CD4-positive, alpha-beta memory T cell (primary cell): ENCODE measurements at regions of chr9 and their contacts with region 1.

Region 1: DNA sequence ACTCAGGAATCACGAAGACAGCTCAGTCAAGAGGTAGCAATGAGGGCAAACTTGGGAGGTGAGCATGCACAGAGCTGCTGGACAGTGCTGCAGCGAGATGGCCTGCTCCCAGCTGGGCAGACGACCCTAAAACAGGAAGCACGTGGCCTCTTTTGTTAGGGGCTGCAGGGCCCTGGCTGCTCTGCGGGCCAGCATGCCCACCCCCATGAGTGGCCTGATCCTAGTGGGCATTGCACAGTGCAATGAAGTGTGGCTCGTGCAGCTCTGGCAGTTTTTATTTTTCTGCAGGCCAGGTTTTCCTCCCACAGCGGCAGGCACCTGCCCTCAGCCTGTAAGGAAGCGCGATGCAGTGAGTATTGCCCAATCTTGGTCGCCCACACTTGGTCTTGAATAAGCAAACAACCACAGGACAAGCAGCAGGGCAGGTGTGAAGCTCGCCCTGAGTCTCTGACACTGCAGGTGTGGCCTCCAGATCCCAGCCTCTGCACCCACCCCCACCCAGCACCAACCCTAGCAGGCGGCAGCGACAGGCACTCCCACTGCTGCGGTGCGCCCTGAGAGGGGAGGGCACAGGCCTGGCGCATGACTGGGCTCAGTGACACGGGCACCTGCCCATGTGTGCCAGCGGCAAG is 60.8 kb downstream of the SEMA4D start:
- DNase-seq: peak; percentile 76 to 91 (median 78)
- H3K4me3 ChIP-seq: peak overlapping the region in 1 of 2 donors; percentile 17
- H3K4me3 Mint-ChIP-seq: peak overlapping the region; percentile 57 to 85 (median 74)
- H3K27ac ChIP-seq: peak overlapping the region; percentile 52
- H3K27ac Mint-ChIP-seq: peak overlapping the region; percentile 90 to 98 (median 95)
- H3K4me1 ChIP-seq: peaks cover 99% of the 10 kb centered on the region
- H3K4me1 Mint-ChIP-seq: peaks cover 61 to 96% (median 83%) of the 10 kb centered on the region in 4 donors
- H3K27me3 ChIP-seq: no peaks in the 10 kb centered on the region
- H3K27me3 Mint-ChIP-seq: no peaks in the 10 kb centered on the region

Region 2: DNA sequence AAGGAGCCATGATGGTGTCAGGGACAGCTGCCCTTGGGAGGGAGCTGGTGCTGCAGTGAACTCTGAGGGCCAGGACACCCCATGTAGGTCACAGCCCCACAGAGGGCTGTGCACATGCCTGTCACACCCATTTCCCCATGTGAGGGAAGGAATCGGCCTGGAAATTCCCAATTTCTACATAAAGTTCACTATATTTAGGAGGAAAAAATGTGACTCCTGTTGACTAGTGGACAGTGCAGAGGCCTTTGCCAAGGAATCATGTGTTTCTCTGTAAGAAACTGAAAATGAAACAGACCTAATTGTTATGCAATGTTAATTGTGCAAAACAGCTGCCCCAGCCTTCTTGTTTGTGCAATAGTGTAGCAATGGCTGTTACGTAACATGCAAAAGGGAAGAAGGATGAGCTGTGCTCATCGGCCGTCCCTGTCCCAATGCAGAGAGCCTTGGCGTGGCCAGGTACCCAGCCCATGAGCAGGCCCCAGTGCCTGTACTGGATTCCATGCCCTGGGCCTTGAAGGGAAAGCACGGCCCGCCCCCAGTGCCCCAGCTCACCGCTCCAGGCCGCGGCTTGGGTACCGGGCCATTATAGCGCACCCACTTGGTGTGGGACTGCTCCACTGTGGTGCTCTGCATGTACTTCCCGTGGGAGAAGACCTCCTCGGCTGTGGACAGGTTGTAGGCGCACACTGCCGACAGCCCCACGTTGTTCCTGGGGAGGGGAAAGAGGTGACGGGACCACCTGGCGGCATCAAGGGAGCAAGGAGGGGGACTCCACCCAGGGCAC is 48.8 kb before region 1 on chr9:
- CTCF ChIA-PET with region 1: no interaction called
- POLR2A ChIA-PET with region 1: no interaction called
- intact Hi-C with region 1: no loop called
- DNase-seq: no peak
- H3K4me3 ChIP-seq: no peak overlapping the region
- H3K4me3 Mint-ChIP-seq: no peak overlapping the region
- H3K27ac ChIP-seq: no peak overlapping the region
- H3K27ac Mint-ChIP-seq: peak overlapping the region in 2 of 7 donors; percentile 43 to 61
- H3K4me1 ChIP-seq: no peaks in the 10 kb centered on the region
- H3K4me1 Mint-ChIP-seq: peaks cover 0 to 8% (median 8%) of the 10 kb centered on the region in 4 donors
- H3K27me3 ChIP-seq: no peaks in the 10 kb centered on the region
- H3K27me3 Mint-ChIP-seq: no peaks in the 10 kb centered on the region

Region 3: DNA sequence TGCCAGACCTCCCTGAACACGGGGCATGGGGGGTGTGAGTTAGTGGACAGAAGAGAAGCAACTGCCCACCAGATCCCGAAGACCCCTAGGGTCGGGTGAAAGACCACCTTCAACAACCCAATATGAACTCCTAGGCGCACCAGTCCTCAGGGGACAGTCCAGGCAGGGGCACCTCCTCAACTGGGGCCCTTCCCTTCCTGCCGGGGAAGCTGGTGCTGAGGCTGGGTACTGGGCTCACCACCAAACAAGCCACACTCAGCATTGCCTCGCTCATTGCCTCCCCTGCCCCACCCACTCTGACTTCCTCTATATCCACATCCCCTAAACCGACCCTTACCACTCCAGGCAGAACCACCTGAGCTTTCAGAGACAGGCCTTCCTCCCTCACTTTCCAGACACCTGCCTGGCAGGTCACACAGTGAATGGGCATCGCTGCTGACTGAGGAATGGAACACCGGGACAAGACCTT is 18.3 kb after region 1 on chr9:
- CTCF ChIA-PET with region 1: interaction called, 3 read pairs
- POLR2A ChIA-PET with region 1: interaction called, 46 read pairs
- intact Hi-C with region 1: loop called (anchors 2 kb)
- DNase-seq: peak; percentile 50 to 72 (median 63)
- H3K4me3 ChIP-seq: peak overlapping the region in 1 of 2 donors; percentile 22
- H3K4me3 Mint-ChIP-seq: peak overlapping the region; percentile 72 to 90 (median 82)
- H3K27ac ChIP-seq: peak overlapping the region; percentile 68
- H3K27ac Mint-ChIP-seq: peak overlapping the region; percentile 92 to 98 (median 97)
- H3K4me1 ChIP-seq: peaks cover 97% of the 10 kb centered on the region
- H3K4me1 Mint-ChIP-seq: peaks cover 71 to 98% (median 87%) of the 10 kb centered on the region in 4 donors
- H3K27me3 ChIP-seq: no peaks in the 10 kb centered on the region
- H3K27me3 Mint-ChIP-seq: no peaks in the 10 kb centered on the region